A549 (cell line): ENCODE measurements at regions of chr3 and their contacts with region 1.

Region 1: GRCh38 chr3:111803123-111803593 is 55.9 kb upstream of the PHLDB2 start:
- DNase-seq: peak; percentile 43 to 93
- ATAC-seq: peak; percentile 93
- H3K4me3 ChIP-seq: no peak overlapping the region; the same call in 2 of the 3 replicates
- H3K27ac ChIP-seq: peak overlapping the region; percentile 89 to 97
- H3K4me1 ChIP-seq: peaks cover 59% of the 10 kb centered on the region
- CTCF ChIP-seq: no peak
- EP300 ChIP-seq: peak; percentile 50 to 81; a peak in 3 of 5 replicates
- POLR2A ChIP-seq: no peak
- RAD21 ChIP-seq: peak in 1 of 2 experiments; percentile 44; a peak in 3 of 5 replicates

Region 2: DNA sequence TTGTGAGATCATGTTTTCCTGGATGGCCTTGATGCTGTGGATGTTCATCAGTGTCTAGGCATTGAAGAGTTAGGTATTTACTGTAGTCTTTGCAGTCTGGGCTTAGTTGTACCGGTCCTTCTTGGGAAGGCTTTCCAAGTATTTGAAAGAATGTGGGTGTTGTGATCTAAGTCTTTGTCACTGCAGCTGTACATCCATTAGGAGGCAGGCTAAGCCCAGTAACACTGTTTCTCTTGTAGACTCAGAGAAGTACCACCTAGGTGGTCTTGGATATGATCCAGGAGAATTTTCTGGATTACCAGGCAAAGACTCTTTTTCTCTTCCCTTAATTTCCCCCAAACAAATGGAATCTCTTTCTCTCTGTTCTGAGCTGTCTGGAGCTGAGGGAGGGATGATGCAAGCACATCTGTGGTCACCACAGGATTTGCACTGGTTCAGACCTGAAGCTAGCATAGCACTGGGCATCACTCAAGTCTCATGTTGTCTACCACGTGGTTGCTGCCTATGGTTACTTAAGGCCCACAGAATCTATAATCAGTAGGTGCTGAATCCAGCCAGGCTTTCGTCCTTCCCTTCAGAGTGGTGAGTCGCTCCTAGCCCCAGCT is 504.0 kb before region 1 on chr3:
- CTCF ChIA-PET with region 1: no interaction called
- POLR2A ChIA-PET with region 1: no interaction called
- DNase-seq: no peak
- ATAC-seq: no peak
- H3K4me3 ChIP-seq: no peak overlapping the region
- H3K27ac ChIP-seq: no peak overlapping the region
- H3K4me1 ChIP-seq: no peaks in the 10 kb centered on the region
- CTCF ChIP-seq: no peak
- EP300 ChIP-seq: no peak
- POLR2A ChIP-seq: no peak
- RAD21 ChIP-seq: no peak; a peak in 1 of 5 replicates

Region 3: GRCh38 chr3:111737706-111738086 is 65.5 kb before region 1 on chr3:
- CTCF ChIA-PET with region 1: interaction called, 5 read pairs
- POLR2A ChIA-PET with region 1: interaction called, 12 read pairs
- DNase-seq: peak in 1 of 2 experiments; percentile 48
- ATAC-seq: no peak
- H3K4me3 ChIP-seq: no peak overlapping the region
- H3K27ac ChIP-seq: peak overlapping the region; percentile 76 to 90
- H3K4me1 ChIP-seq: peaks cover 83% of the 10 kb centered on the region
- CTCF ChIP-seq: no peak
- EP300 ChIP-seq: peak; percentile 20 to 37; a peak in 2 of 5 replicates
- POLR2A ChIP-seq: no peak
- RAD21 ChIP-seq: peak in 1 of 2 experiments; percentile 19; a peak in 1 of 5 replicates

Region 4: GRCh38 chr3:111781561-111782446 is 21.4 kb before region 1 on chr3:
- CTCF ChIA-PET with region 1: no interaction called
- POLR2A ChIA-PET with region 1: no interaction called
- DNase-seq: no peak
- ATAC-seq: no peak; a peak in 1 of 6 replicates
- H3K4me3 ChIP-seq: no peak overlapping the region
- H3K27ac ChIP-seq: peak overlapping the region in 1 of 2 experiments; percentile 44; a peak in 4 of 6 replicates
- H3K4me1 ChIP-seq: peaks cover 46% of the 10 kb centered on the region
- CTCF ChIP-seq: no peak
- EP300 ChIP-seq: no peak
- POLR2A ChIP-seq: no peak
- RAD21 ChIP-seq: no peak

Region 5: GRCh38 chr3:112293368-112294321 is 490.5 kb after region 1 on chr3 and contains the start of gene SLC9C1:
- CTCF ChIA-PET with region 1: no interaction called
- POLR2A ChIA-PET with region 1: no interaction called
- DNase-seq: peak; percentile 21 to 73
- ATAC-seq: peak; percentile 87 to 92
- H3K4me3 ChIP-seq: peak within 1 kb of the TSS; percentile 31
- H3K27ac ChIP-seq: peak within 1 kb of the TSS in 1 of 2 experiments; percentile 35; a peak in 1 of 6 replicates
- H3K4me1 ChIP-seq: no peaks in the 10 kb centered on the region
- CTCF ChIP-seq: peak; percentile 74
- EP300 ChIP-seq: no peak
- POLR2A ChIP-seq: no peak
- RAD21 ChIP-seq: peak; percentile 70 to 72
- polyA plus RNA-seq, gene SLC9C1: not detected in 2 replicates

Region 6: GRCh38 chr3:112550859-112551258 is 747.7 kb after region 1 on chr3:
- CTCF ChIA-PET with region 1: no interaction called
- POLR2A ChIA-PET with region 1: no interaction called
- DNase-seq: peak in 1 of 2 experiments; percentile 10
- ATAC-seq: peak in 1 of 2 experiments; percentile 60; a peak in 2 of 6 replicates
- H3K4me3 ChIP-seq: no peak overlapping the region
- H3K27ac ChIP-seq: no peak overlapping the region
- H3K4me1 ChIP-seq: peaks cover 7% of the 10 kb centered on the region; the same call in 2 of the 3 replicates
- CTCF ChIP-seq: no peak
- EP300 ChIP-seq: no peak
- POLR2A ChIP-seq: no peak
- RAD21 ChIP-seq: no peak